Left ventricle myocardium inferior (tissue), 1 donor: ENCODE measurements at regions of chr17 and their contacts with region 1.

Region 1: DNA sequence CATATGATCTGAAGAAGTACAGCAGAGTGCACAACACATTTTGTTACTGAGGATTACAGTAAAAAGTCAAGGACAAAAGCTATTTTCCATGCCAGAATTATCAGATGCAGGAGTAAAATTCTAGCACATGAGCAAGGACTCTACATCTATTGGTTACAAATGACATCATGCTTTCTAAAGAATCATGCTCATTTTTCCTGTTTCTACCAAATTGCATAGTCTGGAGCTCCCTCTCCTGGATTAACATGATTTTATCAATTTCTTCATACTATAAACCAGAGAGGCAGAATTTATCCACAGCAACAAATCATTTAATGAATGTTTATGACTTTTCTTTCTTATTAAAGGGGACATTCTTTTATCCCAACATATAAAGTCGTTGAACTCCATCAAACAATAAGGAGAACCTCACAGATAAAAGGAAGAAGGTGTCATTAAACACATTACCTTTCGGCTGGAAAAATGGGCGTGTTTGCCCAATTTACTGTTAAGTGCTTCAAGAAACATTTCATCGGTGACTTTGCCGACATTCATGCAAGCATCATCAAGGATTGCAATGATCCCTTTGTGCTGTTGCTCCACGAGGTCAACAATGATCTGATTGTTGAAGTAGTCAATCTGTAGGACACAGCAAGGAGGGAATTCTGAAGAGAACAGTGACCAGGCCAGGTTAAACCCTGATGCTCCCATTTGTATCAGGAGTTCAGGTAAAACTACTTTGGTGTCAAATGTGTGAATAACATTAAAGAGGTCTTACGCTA is 121.7 kb downstream of the MYO1D start:
- DNase-seq: no peak
- H3K4me3 ChIP-seq: no peak overlapping the region
- H3K27ac ChIP-seq: no peak overlapping the region
- H3K4me1 ChIP-seq: peaks cover 4% of the 10 kb centered on the region
- H3K27me3 ChIP-seq: no peaks in the 10 kb centered on the region
- CTCF ChIP-seq: peak; percentile 60

Region 2: DNA sequence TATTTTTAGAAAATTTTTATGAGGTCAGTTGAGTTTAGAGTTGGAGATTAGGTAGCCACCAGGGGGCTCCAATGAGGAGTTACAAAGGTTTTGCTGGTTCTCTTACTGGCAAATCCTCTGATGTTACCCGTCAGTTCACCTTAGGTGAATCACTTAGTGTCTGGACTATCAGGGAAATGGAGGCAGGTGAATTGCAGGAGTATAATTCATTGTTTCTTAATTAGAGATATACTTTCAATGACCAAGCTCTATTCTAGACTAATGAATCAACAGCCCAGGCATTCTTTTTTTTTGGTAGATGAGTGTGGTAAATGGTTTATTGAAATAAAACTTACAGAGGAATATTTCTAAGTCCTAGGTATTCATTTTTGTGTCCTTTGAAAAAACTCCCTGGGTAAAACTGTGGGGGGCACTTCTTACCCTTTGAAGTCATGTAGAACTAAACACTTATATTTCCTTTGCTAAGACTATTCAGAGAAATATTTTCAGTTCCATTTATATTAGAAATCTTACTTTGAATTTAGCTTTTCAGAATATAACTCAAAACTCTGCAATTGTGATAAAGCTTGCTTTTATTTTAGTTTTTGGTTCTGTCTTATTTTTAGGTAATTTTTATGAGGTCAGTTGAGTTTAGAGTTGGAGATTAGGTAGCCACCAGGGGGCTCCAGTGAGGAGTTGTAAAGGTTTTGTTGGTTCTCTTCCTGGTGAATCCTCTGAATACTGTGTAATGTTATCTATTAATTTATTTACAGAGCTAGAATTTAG is 293.2 kb before region 1 on chr17:
- intact Hi-C with region 1: loop called (anchors 5 kb)
- DNase-seq: no peak
- H3K4me3 ChIP-seq: no peak overlapping the region
- H3K27ac ChIP-seq: no peak overlapping the region
- H3K4me1 ChIP-seq: peaks cover 18% of the 10 kb centered on the region
- H3K27me3 ChIP-seq: no peaks in the 10 kb centered on the region
- CTCF ChIP-seq: peak; percentile 58

Region 3: GRCh38 chr17:32659419-32659842 is 95.8 kb before region 1 on chr17:
- intact Hi-C with region 1: loop called (anchors 10 kb)
- DNase-seq: peak; percentile 65
- H3K4me3 ChIP-seq: no peak overlapping the region
- H3K27ac ChIP-seq: peak overlapping the region; percentile 39
- H3K4me1 ChIP-seq: peaks cover 14% of the 10 kb centered on the region
- H3K27me3 ChIP-seq: no peaks in the 10 kb centered on the region
- CTCF ChIP-seq: peak; percentile 97

Region 4: GRCh38 chr17:32794533-32795246 is 39.5 kb after region 1 on chr17:
- intact Hi-C with region 1: no loop called
- DNase-seq: no peak
- H3K4me3 ChIP-seq: no peak overlapping the region
- H3K27ac ChIP-seq: no peak overlapping the region
- H3K4me1 ChIP-seq: no peaks in the 10 kb centered on the region
- H3K27me3 ChIP-seq: no peaks in the 10 kb centered on the region
- CTCF ChIP-seq: no peak

Region 5: GRCh38 chr17:32819035-32819434 is 63.8 kb after region 1 on chr17:
- intact Hi-C with region 1: no loop called
- DNase-seq: no peak
- H3K4me3 ChIP-seq: peak overlapping the region; percentile 20
- H3K27ac ChIP-seq: peak overlapping the region; percentile 69
- H3K4me1 ChIP-seq: peaks cover 25% of the 10 kb centered on the region
- H3K27me3 ChIP-seq: no peaks in the 10 kb centered on the region
- CTCF ChIP-seq: no peak